Dorsolateral prefrontal cortex (tissue), 120 donors: ENCODE measurements at regions of chr1 and their contacts with region 1.

Region 1: DNA sequence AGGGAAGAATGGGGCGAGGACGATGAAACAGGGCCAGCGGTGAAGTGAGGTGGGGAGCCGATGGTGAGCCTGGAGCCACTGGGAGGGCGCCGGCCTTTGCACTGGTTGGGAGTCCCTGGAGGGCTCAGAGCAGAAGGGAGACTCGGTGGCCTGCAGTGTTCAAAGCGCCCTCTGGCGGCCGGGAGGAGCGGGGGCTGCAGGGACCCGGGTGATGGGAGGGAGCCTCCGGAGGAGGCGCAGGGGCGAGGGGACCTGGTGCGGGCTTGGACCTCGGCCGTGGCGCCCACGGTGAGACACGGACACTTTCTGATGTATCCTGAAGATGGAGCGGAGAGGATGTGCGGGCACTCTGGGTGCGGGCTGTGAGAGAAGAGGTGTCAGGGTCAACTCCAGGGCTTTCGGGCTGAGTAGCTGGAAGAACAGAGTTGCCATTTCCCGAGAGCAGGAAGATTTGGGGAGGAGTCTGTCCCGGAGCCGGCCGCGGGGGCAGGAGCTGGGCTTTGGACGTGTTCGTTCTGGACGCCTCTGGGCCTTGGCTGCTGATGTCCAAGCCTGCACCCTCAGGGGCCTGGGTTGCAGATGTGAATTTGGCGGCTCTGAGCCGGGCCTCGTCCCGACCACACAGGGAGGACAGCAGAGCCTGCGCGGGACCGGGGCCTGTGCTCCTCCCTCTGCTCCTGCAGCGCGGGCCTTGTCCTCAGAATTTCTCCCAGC is 29.7 kb downstream of the HEYL start:
- DNase-seq: peak in 1 of 10 donors; percentile 41
- H3K4me3 ChIP-seq: no peak overlapping the region
- H3K27ac ChIP-seq: no peak overlapping the region
- H3K27me3 ChIP-seq: peaks cover 0 to 3% (median 0%) of the 10 kb centered on the region in 45 donors
- CTCF ChIP-seq: peak in 50 of 56 donors; percentile 21 to 70 (median 50)

Region 2: GRCh38 chr1:39653546-39654031 is 43.8 kb after region 1 on chr1:
- intact Hi-C with region 1: loop called (anchors 1 to 2 kb)
- DNase-seq: peak; percentile 71 to 94 (median 84)
- H3K4me3 ChIP-seq: peak overlapping the region in 36 of 59 donors; percentile 1 to 52 (median 26)
- H3K27ac ChIP-seq: peak overlapping the region in 44 of 59 donors; percentile 1 to 87 (median 56)
- H3K27me3 ChIP-seq: no peaks in the 10 kb centered on the region
- CTCF ChIP-seq: peak; percentile 86 to 99 (median 95)

Region 3: DNA sequence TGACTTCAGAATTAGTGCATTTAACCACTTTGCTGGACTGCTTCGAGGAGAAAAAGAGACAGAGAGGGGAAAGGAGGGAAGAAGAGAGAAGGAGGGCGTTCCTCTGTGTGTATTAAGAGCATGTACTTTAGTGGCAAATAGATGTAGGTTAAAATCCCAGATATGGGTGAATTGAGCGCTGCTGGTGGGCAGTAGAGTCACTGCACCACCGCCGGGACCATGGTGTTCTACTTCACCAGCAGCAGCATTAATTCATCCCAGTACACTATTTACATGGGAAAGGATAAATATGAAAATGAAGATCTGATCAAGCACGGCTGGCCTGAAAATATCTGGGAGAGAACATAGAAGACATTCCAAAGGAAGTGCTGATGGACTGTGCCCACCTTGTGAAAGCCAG is 108.0 kb after region 1 on chr1:
- intact Hi-C with region 1: loop called (anchors 5 kb)
- DNase-seq: no peak
- H3K4me3 ChIP-seq: no peak overlapping the region
- H3K27ac ChIP-seq: no peak overlapping the region
- H3K27me3 ChIP-seq: no peaks in the 10 kb centered on the region
- CTCF ChIP-seq: no peak

Region 4: DNA sequence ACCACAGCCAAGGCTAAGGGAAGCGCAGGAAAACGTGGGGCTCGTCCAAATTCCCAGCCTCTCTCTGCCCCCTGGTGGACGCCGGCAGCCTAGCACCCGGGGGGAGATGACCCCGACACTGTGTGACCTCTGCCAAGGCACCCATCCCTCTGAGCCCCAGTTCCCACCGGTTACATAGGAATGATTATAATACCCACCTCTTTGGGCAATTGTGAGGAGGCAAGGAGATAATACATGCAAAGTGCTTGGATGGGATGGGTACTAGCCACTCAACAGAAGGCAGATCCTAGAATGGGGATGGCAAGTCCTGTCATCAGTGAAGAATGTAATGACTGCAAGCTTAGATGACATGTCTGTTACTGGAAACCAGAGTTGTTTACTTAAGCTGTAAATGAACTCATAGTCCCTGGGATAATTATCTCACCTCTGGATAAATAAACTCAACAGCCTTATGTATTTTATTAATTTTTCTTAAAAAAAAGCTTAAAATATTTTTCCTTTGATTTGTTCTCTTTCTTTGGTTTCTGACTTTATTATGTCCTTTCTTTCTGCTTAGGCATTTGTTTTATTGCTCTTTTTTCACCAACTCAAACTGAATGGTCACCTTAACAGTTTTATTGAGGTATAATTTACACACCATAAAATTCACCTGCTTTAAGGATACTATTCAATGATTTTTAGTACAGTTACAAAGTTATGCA is 190.1 kb after region 1 on chr1:
- intact Hi-C with region 1: loop called (anchors 10 kb)
- DNase-seq: peak in 9 of 10 donors; percentile 44 to 84 (median 73)
- H3K4me3 ChIP-seq: peak overlapping the region in 24 of 59 donors; percentile 0 to 49 (median 24)
- H3K27ac ChIP-seq: no peak overlapping the region
- H3K27me3 ChIP-seq: no peaks in the 10 kb centered on the region
- CTCF ChIP-seq: peak; percentile 48 to 94 (median 81)